HepG2 (cell line): ENCODE measurements at regions of chr3 and their contacts with region 1.

Region 1: DNA sequence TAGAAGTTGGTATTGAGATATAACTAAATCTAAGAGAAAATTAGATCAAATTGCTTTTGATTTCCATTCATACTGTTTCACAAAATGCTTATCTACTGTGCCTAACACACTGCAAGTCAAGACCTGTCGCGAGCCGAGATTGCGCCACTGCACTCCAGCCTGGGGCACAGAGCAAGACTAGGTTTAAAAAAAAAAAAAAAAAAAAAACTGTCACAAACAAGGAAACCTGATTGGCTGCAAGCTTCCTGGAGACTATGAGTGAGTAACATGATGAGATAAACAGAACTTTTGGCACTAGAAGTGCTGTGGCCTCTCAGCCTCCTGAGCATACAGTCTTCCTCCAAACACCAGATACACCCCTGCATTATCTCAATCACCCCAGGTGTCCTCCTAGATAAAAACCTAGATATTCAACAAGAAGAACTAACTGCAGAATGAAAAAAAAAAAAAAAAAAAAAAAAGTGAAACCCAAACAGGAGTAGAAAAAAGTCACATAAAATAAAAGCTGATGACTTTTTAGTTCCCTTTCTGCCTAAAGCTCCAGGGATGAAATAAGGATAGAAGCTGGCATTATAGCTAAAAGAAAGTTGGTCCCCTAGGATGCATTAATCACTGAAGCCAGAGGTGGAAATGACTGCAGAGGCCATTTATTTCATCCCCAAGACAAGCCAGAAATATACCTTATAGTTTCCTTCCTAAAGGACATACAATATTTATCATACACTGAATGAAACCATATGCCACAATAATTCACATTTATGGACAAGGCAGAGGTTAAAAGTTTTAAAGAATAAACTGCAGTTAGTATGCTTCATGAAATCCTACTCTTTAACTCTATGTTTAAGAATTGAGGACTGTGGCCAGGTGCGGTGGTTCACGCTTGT is 82.4 kb downstream of the P3H2 start:
- DNase-seq: no peak
- ATAC-seq: no peak
- H3K4me3 ChIP-seq: no peak overlapping the region
- H3K27ac ChIP-seq: no peak overlapping the region
- H3K4me1 ChIP-seq: no peaks in the 10 kb centered on the region
- H3K27me3 ChIP-seq: no peaks in the 10 kb centered on the region
- CTCF ChIP-seq: no peak
- EP300 ChIP-seq: no peak
- POLR2A ChIP-seq: no peak
- RAD21 ChIP-seq: no peak

Region 2: DNA sequence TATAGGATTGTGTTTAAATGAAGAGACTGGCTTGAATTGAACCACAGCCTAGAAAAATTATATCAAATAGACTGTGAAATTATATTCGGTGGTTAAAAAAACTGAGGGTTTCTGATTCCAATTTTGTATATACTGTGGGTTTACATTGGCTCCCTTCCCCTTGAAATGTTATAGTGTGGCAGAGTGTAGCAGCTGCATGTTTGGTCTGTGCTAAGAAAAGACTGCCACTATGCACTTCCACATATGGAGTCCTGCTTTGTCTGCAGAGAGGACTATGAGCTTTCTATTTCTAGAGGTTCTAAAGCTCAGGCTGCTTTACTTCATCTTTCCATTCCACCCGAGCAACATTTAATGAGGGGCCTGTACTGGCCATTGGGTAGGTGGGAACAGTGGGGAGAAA is 29.9 kb before region 1 on chr3:
- CTCF ChIA-PET with region 1: no interaction called
- POLR2A ChIA-PET with region 1: no interaction called
- in situ Hi-C with region 1: no loop called
- intact Hi-C with region 1: loop called (anchors 1 kb)
- DNase-seq: no peak
- ATAC-seq: no peak
- H3K4me3 ChIP-seq: no peak overlapping the region
- H3K27ac ChIP-seq: no peak overlapping the region
- H3K4me1 ChIP-seq: peaks cover 13% of the 10 kb centered on the region
- H3K27me3 ChIP-seq: no peaks in the 10 kb centered on the region
- CTCF ChIP-seq: no peak
- EP300 ChIP-seq: no peak
- POLR2A ChIP-seq: no peak
- RAD21 ChIP-seq: no peak